ENCODE measurements at regions of chr4 and their contacts with region 1.

Region 1: DNA sequence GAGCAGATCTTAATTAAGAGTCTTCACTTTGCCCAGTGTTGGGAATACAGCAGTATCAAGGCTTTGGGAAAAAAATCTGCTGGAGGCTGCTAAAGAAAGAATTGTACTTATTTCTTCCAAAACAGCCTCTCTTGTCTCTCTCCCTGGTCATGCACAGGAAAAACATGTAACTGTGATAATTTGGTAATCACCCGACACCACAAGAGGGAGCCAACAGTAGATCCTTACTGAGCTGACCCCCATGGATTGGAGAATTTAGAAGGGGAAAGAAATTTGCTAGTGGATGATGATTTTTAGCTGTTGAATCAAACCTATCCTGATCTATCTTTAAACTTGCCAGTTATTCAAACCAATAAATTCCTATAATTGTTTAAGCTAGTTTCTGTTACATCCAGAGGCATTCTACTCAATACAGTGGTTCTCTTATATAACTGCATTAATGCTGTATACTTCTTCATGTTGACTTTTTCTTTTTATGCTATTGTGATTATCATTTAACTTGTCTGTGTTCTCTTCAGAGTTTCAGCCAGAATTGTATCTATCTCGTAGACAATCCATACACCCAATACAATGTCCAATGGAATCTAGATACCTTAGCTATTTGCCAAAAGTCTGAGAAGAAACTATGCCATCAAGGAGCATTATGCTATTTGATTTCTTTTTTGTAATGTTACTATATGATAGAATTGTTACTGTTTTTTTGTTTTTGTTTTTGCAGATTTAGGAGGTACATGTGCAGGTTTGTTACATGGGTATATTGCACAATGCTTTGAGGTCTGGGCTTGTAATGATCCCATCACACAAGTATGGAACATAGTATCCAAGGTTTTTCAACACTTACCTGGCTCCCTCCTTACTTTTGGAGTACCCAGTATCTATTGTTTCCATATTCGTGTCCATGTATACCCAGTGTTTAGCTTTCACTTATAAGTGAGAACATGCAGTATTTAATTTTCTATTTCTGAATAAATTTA is 31.3 kb upstream of the ARHGEF38 start:
- DNase-seq: peak; percentile 18
- ATAC-seq: peak in 1 of 2 donors; percentile 41

Region 2: GRCh38 chr4:105126158-105126937 is 394.8 kb before region 1 on chr4:
- intact Hi-C with region 1: no loop called
- DNase-seq: no peak
- ATAC-seq: no peak

Region 3: GRCh38 chr4:105666693-105667092 is 145.6 kb after region 1 on chr4:
- intact Hi-C with region 1: loop called (anchors 2 to 5 kb)
- DNase-seq: no peak
- ATAC-seq: no peak

Region 4: GRCh38 chr4:105715692-105716278 is 194.7 kb after region 1 on chr4:
- intact Hi-C with region 1: loop called in 1 of 2 experiments (anchors 5 kb)
- DNase-seq: no peak
- ATAC-seq: no peak